Activated CD4-positive, alpha-beta memory T cell treated with anti-CD3 and anti-CD28 coated beads for 36 hours (primary cell): ENCODE measurements at regions of chr12 and their contacts with region 1.

Region 1: DNA sequence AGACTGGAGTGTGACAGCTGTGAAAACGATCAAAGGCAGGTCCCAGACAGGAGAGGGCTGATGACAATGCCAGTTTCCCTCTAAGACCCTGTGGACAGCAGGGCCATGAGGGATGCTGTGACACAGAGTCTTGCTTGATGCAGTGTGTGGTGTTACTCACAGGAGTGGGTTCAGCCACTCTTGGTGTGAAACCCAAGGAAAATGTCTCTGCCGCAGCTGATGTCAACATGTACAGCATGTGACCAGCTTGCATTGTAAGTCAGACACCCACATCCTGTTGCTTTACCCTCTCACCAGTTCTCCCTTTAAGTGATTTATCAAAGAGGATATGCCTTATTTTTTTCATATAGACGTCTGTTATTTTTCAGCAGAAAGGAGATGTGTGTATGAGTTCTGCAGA is 268.6 kb downstream of the BTG1 start:
- DNase-seq: peak; percentile 91
- H3K4me3 Mint-ChIP-seq: peak overlapping the region; percentile 71
- H3K27ac Mint-ChIP-seq: peak overlapping the region; percentile 94
- H3K4me1 Mint-ChIP-seq: peaks cover 67% of the 10 kb centered on the region
- H3K27me3 Mint-ChIP-seq: no peaks in the 10 kb centered on the region

Region 2: GRCh38 chr12:91778938-91779400 is 98.1 kb before region 1 on chr12:
- CTCF ChIA-PET with region 1: interaction called, 3 read pairs
- POLR2A ChIA-PET with region 1: interaction called, 4 read pairs
- intact Hi-C with region 1: loop called (anchors 1 kb)
- DNase-seq: peak; percentile 65
- H3K4me3 Mint-ChIP-seq: peak overlapping the region; percentile 48
- H3K27ac Mint-ChIP-seq: peak overlapping the region; percentile 75
- H3K4me1 Mint-ChIP-seq: peaks cover 27% of the 10 kb centered on the region
- H3K27me3 Mint-ChIP-seq: peaks cover 3% of the 10 kb centered on the region

Region 3: DNA sequence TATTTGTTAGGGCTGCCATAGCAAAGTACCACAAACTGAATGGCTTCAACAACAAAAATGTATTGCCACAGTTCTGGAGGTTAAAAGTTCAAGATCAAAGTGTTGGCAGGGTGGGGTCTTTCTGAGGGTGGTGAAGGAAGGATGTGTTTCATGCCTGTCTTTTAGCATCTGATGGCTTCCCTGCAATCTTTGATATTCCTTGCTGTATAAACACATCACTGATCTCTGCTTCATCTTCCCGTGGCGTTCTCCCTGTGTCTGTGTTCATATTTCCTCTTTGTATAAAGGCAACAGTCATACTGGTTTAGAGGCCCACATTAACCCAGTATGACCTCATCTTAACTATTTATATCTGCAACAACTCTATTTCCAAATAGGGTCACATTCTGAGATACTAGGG is 101.1 kb after region 1 on chr12:
- CTCF ChIA-PET with region 1: no interaction called
- POLR2A ChIA-PET with region 1: no interaction called
- intact Hi-C with region 1: loop called (anchors 5 kb)
- DNase-seq: peak; percentile 17
- H3K4me3 Mint-ChIP-seq: no peak overlapping the region
- H3K27ac Mint-ChIP-seq: peak overlapping the region; percentile 24
- H3K4me1 Mint-ChIP-seq: peaks cover 24% of the 10 kb centered on the region
- H3K27me3 Mint-ChIP-seq: no peaks in the 10 kb centered on the region

Region 4: DNA sequence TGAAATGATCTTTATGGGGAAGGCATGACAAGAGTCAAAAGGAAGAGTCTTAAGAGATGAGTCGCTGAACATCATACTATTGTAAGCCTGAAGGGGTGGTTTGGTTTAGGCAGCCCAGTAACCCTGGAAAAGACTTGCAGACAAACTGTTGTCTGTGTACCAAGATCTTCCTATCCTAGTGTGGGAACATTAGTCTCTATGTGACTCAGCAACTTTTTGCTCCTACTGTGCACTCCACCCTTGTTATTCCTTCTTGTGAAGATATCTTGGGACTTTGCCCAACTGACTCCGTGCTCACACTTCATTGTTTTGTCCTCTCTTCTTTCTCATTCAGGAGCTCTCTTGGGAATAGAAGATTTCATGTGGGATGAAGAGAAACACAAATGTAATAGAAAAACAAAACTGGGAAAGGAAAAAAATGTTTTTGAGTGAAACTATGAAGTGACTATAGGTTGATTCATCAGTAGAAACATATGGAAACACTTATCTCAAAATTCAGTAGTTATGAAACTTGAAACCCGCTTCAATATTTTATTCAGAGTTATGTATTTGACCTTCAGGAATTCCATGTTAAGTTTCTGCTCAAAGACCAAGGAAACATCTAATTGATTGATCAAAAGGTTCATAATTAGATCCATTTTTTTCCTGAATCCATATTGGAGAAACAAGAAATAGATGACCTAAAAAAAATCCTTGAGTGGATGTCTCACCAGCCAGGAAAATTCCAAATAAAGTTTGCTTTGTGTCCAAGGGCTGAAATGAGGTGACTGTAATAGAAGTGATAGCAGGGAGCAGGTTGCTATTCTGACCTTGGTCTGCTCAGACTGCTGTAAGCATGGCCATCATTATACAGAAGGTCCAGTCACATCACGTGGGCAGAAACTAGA is 201.4 kb after region 1 on chr12:
- CTCF ChIA-PET with region 1: no interaction called
- POLR2A ChIA-PET with region 1: no interaction called
- intact Hi-C with region 1: no loop called
- DNase-seq: peak; percentile 36
- H3K4me3 Mint-ChIP-seq: no peak overlapping the region
- H3K27ac Mint-ChIP-seq: peak overlapping the region; percentile 70
- H3K4me1 Mint-ChIP-seq: peaks cover 60% of the 10 kb centered on the region
- H3K27me3 Mint-ChIP-seq: no peaks in the 10 kb centered on the region

Region 5: GRCh38 chr12:92136965-92137721 is 260.1 kb after region 1 on chr12:
- CTCF ChIA-PET with region 1: interaction called, 4 read pairs
- POLR2A ChIA-PET with region 1: interaction called, 51 read pairs
- intact Hi-C with region 1: loop called (anchors 2 kb)
- DNase-seq: no peak
- H3K4me3 Mint-ChIP-seq: peak overlapping the region; percentile 100
- H3K27ac Mint-ChIP-seq: peak overlapping the region; percentile 91
- H3K4me1 Mint-ChIP-seq: peaks cover 65% of the 10 kb centered on the region
- H3K27me3 Mint-ChIP-seq: no peaks in the 10 kb centered on the region

Region 6: GRCh38 chr12:92396647-92397252 is 519.7 kb after region 1 on chr12:
- CTCF ChIA-PET with region 1: no interaction called
- POLR2A ChIA-PET with region 1: no interaction called
- intact Hi-C with region 1: loop called (anchors 2 kb)
- DNase-seq: peak; percentile 61
- H3K4me3 Mint-ChIP-seq: no peak overlapping the region
- H3K27ac Mint-ChIP-seq: peak overlapping the region; percentile 86
- H3K4me1 Mint-ChIP-seq: peaks cover 90% of the 10 kb centered on the region
- H3K27me3 Mint-ChIP-seq: no peaks in the 10 kb centered on the region

Region 7: DNA sequence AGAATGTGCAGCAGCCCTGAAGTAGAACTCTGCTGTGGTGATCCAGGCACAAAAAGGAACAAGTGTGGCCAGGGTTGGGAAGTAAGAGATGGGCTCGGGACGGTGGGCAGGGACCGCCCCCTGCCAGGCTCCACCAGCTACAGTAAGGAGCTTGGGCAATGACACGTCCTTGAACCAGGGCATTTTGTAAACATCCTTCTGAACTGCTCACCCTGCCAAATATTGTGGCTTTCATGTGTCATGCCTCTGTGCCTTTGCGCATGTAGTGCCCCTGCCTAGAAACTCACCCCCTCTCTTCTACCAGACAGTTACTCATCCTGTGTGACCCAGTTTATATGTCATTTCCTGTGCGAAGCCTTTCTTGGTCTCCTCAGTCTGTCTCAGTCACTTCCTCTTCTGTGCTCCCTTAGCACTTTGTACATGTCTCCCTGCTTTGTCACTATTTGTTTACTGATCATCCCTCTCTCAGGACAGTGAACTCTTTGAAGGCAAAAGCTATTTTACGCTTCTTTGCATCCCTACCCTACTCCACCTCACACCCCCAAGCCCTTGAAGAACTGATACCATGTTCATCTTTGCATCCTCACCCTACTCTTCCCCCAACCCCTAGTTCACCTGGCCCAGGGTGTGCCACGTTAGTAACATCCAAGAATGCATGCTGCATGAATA is 716.8 kb after region 1 on chr12:
- CTCF ChIA-PET with region 1: no interaction called
- POLR2A ChIA-PET with region 1: no interaction called
- intact Hi-C with region 1: loop called (anchors 2 kb)
- DNase-seq: peak; percentile 87
- H3K4me3 Mint-ChIP-seq: peak overlapping the region; percentile 25
- H3K27ac Mint-ChIP-seq: peak overlapping the region; percentile 92
- H3K4me1 Mint-ChIP-seq: peaks cover 80% of the 10 kb centered on the region
- H3K27me3 Mint-ChIP-seq: no peaks in the 10 kb centered on the region